ENCODE measurements at regions of chr11 and their contacts with region 1.

Region 1: DNA sequence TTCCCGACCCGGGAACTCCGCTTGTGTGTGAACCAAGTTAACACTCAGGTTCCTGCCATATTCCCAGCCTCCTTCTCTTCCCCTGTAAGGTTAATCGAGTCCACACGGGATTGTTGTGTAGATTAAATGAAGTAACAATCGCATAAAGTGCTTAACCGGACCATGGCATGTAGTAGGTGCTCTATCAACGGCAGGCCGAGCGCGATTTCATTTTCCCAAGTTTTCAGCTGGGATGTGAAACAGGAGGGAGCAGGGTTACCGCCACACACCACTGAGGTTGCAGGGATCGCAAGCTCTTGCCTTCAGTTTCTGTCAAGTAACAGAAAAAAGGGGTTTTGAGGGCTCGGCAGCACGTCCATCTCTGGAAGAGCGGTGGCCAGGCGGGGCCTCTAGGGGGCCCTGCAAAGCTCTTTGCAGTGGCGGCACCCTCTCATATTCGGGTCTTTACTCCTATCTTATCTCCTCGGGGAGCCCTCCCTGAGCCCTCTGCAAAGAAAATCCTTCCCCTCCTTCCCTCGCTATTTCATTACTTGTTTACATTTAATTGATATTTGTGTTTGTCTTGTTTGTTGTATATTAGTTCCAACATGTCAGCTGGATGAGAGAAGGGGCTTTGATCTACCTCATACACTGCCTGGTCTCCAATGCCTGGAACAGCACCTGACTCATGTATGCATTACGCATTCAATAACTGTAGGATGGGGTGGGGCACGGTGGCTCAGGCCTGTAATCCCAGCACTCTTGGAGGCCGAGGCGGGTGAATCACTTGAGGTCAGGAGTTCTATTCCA is 818 bp upstream of the PLEKHA7 start:
- DNase-seq: no peak
- ATAC-seq: no peak

Region 2: DNA sequence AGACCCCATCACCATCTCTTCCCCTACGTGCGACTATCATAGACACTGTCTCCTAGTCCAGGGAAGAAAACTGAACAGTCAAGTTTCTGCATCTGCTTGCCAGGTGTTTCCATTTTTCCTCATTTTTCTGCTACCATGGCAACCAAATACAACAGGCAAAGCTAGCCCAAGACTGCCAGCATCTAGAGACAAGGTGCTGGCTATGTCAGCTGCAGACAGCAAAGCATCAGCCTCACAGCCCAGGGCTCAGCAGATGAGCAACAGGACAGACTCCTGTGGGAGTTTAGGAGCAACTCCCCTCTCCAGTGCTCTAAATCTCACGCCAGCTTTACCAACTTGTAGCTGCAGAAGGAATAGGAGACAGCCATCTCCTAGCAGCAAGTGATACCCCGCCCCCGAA is 152.3 kb before region 1 on chr11:
- intact Hi-C with region 1: no loop called
- DNase-seq: no peak
- ATAC-seq: no peak

Region 3: GRCh38 chr11:16945671-16946469 is 69.2 kb before region 1 on chr11:
- intact Hi-C with region 1: loop called (anchors 5 kb)
- DNase-seq: no peak
- ATAC-seq: peak; percentile 76

Region 4: DNA sequence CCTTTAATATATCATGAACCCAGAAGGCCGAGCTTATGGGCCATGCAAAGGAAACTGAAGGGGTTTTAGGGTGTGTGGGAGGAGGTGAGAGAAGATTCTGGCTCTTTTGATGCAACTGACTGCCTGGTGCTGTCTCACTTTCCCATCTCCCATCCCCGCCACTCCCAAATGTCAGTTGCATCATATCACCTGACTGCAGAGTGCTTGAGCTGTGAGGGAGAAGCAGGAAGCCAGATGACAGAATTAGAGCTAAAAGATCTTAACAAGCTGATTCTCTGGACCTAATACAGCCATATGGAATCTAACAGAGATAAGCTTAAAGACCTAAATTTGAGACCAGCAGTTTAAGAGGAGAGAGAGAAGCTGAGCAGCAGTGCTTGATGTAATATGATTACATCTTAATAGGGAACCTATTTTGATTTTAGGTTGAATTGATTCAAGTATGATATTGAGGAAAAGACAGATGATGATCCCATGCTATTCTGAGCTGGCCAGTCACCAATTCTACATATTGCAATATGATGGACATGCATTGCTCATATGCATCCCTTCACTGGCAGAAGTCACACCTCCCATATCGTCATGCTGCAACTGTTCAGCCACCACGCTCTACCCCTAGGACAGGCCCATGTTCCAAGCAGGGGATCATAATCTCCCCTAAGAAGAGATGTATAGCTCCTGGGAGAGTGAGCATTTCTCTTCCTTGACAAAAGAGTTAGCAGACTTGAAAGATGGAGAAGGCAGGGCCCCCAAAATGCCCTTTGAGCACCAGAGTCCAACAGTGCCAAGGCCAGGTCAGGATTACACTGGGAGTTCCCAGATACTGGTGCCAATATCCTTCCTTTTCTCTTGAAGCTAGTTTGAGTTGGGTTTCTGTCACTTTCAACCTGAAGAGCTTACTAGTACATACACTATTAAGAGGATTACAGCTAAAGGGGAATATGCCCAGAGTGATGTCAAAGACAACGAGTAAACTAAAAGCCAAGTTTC is 45.7 kb before region 1 on chr11:
- intact Hi-C with region 1: loop called (anchors 5 kb)
- DNase-seq: no peak
- ATAC-seq: no peak

Measured in Right ventricle myocardium inferior (tissue), 1 donor.